ENCODE measurements at regions of chr15 and their contacts with region 1.

Region 1: GRCh38 chr15:59492389-59493377 is 54.7 kb downstream of the FAM81A start:
- ATAC-seq: peak; percentile 95 to 100 (median 99)
- H3K4me3 ChIP-seq: no peak overlapping the region
- H3K27ac ChIP-seq: no peak overlapping the region
- H3K4me1 ChIP-seq: no peaks in the 10 kb centered on the region

Region 2: GRCh38 chr15:58957101-58957973 is 535.3 kb before region 1 on chr15:
- in situ Hi-C with region 1: loop called in 1 of 9 experiments (anchors 25 kb)
- ATAC-seq: peak in 5 of 8 experiments; percentile 38 to 99 (median 86)
- H3K4me3 ChIP-seq: no peak overlapping the region
- H3K27ac ChIP-seq: no peak overlapping the region
- H3K4me1 ChIP-seq: no peaks in the 10 kb centered on the region

Region 3: DNA sequence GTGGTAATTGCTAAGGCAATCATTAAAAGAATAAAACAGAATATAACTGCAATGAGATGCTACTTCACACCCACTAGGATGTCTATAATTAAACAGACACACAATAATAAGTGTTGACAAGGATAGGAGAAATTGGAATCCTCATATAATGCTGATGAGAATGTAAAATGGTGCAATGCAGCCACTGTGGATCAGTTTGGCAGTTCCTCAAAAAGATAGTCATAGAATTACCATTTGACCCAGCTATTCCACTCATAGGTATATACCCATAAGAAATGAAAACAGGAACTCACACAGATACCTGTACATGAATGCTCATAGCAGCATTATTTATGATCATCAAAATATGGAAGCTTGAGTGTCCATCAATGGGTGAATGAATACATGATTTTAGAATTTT is 514.8 kb before region 1 on chr15:
- in situ Hi-C with region 1: loop called in 7 of 9 experiments (anchors 10 to 25 kb)
- ATAC-seq: no peak
- H3K4me3 ChIP-seq: no peak overlapping the region
- H3K27ac ChIP-seq: no peak overlapping the region
- H3K4me1 ChIP-seq: no peaks in the 10 kb centered on the region

Region 4: GRCh38 chr15:58987489-58988005 is 505.1 kb before region 1 on chr15 and contains the start of gene RNF111:
- in situ Hi-C with region 1: loop called in 5 of 9 experiments (anchors 10 to 25 kb)
- ATAC-seq: peak; percentile 78 to 90 (median 84)
- H3K4me3 ChIP-seq: peak within 1 kb of the TSS; percentile 76 to 94 (median 91)
- H3K27ac ChIP-seq: peak within 1 kb of the TSS; percentile 88 to 92
- H3K4me1 ChIP-seq: peaks cover 2 to 15% of the 10 kb centered on the region in 2 donors
- total RNA-seq, gene RNF111: 11.0 to 37.5 (median 22.3) TPM

Region 5: GRCh38 chr15:59174835-59175831 is 317.6 kb before region 1 on chr15:
- in situ Hi-C with region 1: loop called in 6 of 9 experiments (anchors 25 kb)
- ATAC-seq: peak; percentile 84 to 96 (median 92)
- H3K4me3 ChIP-seq: no peak overlapping the region
- H3K27ac ChIP-seq: no peak overlapping the region
- H3K4me1 ChIP-seq: peaks cover 0 to 13% of the 10 kb centered on the region in 2 donors

Region 6: GRCh38 chr15:59247364-59247763 is 245.3 kb before region 1 on chr15:
- in situ Hi-C with region 1: loop called in 2 of 9 experiments (anchors 25 kb)
- ATAC-seq: peak; percentile 30 to 91 (median 70)
- H3K4me3 ChIP-seq: no peak overlapping the region
- H3K27ac ChIP-seq: no peak overlapping the region
- H3K4me1 ChIP-seq: no peaks in the 10 kb centered on the region

Region 7: DNA sequence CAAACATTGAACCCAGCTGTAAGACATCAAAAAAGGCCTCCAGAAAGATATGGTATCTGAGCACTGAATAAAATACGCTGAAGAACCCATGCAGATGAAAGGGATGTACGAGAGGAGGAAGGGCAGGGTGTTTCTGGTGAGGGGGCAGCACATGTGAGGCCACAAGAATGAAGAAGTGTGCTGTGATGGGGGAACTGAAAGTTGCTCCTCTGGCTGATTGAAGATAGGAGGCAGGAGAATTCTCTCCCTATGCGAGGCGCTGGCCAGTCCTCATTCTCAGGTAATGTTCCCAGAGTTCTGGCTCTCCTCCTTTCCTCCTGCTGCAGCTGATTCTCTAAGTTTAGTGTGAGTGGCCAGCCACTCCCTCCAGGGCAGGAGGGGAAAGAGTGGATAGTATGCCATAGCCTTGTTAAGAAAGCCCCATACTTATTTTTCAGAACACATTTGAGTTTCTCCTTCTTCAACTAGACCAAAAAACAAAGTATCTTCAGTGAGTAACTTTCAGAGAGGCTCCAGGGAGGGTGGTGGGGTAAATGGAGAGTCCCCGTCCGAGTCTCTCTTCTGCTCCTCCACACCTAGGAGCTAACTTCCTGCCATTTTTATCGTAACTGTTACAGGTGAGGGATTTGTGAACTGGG is 93.1 kb before region 1 on chr15:
- in situ Hi-C with region 1: loop called in 1 of 9 experiments (anchors 25 kb)
- ATAC-seq: no peak
- H3K4me3 ChIP-seq: no peak overlapping the region
- H3K27ac ChIP-seq: no peak overlapping the region
- H3K4me1 ChIP-seq: peaks cover 0 to 4% of the 10 kb centered on the region in 2 donors

Region 8: GRCh38 chr15:60091165-60091564 is 598.5 kb after region 1 on chr15:
- in situ Hi-C with region 1: no loop called
- ATAC-seq: peak in 2 of 8 experiments; percentile 69 to 97
- H3K4me3 ChIP-seq: no peak overlapping the region
- H3K27ac ChIP-seq: no peak overlapping the region
- H3K4me1 ChIP-seq: peaks cover 42 to 66% of the 10 kb centered on the region in 2 donors

Region 9: GRCh38 chr15:60134609-60135008 is 641.9 kb after region 1 on chr15:
- in situ Hi-C with region 1: no loop called
- ATAC-seq: no peak
- H3K4me3 ChIP-seq: no peak overlapping the region
- H3K27ac ChIP-seq: no peak overlapping the region
- H3K4me1 ChIP-seq: no peaks in the 10 kb centered on the region